H1 (cell line): ENCODE measurements at regions of chr2 and their contacts with region 1.

Region 1: DNA sequence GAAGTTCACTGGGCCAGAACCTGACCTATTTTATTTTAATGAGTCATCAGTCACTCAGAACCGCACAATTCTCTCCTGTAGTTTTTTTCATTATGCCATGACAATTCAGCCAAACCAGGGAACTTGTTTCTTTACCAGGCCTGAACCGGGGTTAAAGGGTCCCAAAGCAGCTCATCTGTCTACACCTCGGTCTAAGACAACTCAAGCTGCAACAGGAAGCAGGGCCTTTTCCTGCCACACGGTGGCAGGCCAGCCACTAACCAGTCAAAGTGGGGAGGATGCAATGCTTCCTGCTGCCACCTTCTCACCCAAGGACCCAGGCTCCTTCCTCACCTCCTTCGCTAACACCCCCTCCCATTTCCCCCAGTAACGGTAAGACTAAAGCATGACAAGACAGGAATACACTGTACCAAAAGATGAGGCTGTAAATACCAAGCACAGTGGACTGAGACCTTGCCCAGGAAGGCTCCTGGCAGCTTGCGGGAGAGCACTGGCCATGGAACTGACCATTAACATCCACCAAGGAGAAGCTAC is 56.7 kb upstream of the ACKR3 start:
- DNase-seq: peak; percentile 53 to 70
- H3K4me3 ChIP-seq: no peak overlapping the region
- H3K27ac ChIP-seq: no peak overlapping the region
- H3K4me1 ChIP-seq: no peaks in the 10 kb centered on the region
- H3K27me3 ChIP-seq: no peaks in the 10 kb centered on the region; a peak in 1 of 7 replicates
- CTCF ChIP-seq: peak; percentile 93 to 97 (median 93)
- EP300 ChIP-seq: no peak
- POLR2A ChIP-seq: no peak
- RAD21 ChIP-seq: peak; percentile 87 to 88

Region 2: GRCh38 chr2:236309669-236310029 is 203.3 kb before region 1 on chr2:
- CTCF ChIA-PET with region 1: interaction called, 17 read pairs
- POLR2A ChIA-PET with region 1: no interaction called
- DNase-seq: peak; percentile 13 to 77
- H3K4me3 ChIP-seq: no peak overlapping the region
- H3K27ac ChIP-seq: no peak overlapping the region
- H3K4me1 ChIP-seq: peaks cover 3 to 12% (median 9%) of the 10 kb centered on the region in 4 experiments; a peak in 5 of 7 replicates
- H3K27me3 ChIP-seq: no peaks in the 10 kb centered on the region
- CTCF ChIP-seq: peak; percentile 80 to 83 (median 82)
- EP300 ChIP-seq: no peak
- POLR2A ChIP-seq: no peak
- RAD21 ChIP-seq: peak; percentile 93 to 97

Region 3: GRCh38 chr2:236536727-236537398 is 23.9 kb after region 1 on chr2:
- CTCF ChIA-PET with region 1: interaction called, 22 read pairs
- POLR2A ChIA-PET with region 1: no interaction called
- DNase-seq: no peak
- H3K4me3 ChIP-seq: no peak overlapping the region
- H3K27ac ChIP-seq: no peak overlapping the region
- H3K4me1 ChIP-seq: no peaks in the 10 kb centered on the region; a peak in 1 of 7 replicates
- H3K27me3 ChIP-seq: no peaks in the 10 kb centered on the region
- CTCF ChIP-seq: no peak
- EP300 ChIP-seq: no peak
- POLR2A ChIP-seq: no peak
- RAD21 ChIP-seq: 0 out of 4 replicates have a peak, but pooled peaks of 1 of the 2 experiments have one; percentile 15

Region 4: GRCh38 chr2:236604575-236605344 is 91.8 kb after region 1 on chr2:
- CTCF ChIA-PET with region 1: interaction called, 13 read pairs
- POLR2A ChIA-PET with region 1: interaction called, 3 read pairs
- DNase-seq: no peak
- H3K4me3 ChIP-seq: no peak overlapping the region
- H3K27ac ChIP-seq: no peak overlapping the region
- H3K4me1 ChIP-seq: no peaks in the 10 kb centered on the region
- H3K27me3 ChIP-seq: no peaks in the 10 kb centered on the region
- CTCF ChIP-seq: no peak
- EP300 ChIP-seq: no peak
- POLR2A ChIP-seq: no peak
- RAD21 ChIP-seq: no peak

Region 5: DNA sequence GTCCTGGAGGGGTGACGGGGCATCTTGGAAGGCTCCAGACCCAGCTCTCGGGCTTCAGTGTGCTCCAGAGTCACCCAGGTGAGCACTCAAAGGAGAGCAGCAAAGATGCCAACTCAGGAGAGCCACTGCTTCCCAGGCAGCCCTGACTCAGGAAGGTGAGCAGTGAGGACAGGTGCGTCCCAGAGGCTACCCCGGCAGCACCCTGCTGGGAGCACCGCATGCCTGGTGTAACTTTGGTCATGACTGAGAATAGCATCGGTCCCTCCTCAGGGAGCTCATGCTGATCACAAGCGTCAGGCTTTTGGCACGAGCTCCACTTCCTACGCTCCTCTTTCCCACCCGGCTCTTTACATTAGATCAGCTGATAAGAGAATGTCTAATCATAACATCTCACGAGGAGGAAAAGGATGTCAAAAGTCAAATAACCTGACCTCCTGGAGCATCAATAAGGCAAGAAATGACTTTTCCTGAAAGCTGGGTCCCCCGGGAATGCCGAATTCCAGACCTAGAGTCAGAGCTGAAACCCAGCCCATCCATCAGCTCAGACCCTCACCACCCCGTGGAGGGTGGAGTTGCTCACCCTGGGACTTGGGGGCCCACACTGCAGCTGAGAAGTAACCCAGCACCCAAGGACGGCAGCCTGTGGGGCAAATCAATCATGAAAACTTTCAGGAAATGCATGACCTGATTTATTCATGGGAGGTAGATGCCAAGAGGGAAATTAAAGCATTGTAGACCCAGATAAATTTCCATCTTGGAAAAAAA is 305.5 kb after region 1 on chr2:
- CTCF ChIA-PET with region 1: no interaction called
- POLR2A ChIA-PET with region 1: no interaction called
- DNase-seq: no peak
- H3K4me3 ChIP-seq: no peak overlapping the region
- H3K27ac ChIP-seq: no peak overlapping the region
- H3K4me1 ChIP-seq: peaks cover 0 to 4% (median 2%) of the 10 kb centered on the region in 4 experiments; a peak in 5 of 7 replicates
- H3K27me3 ChIP-seq: no peaks in the 10 kb centered on the region; a peak in 1 of 7 replicates
- CTCF ChIP-seq: no peak
- EP300 ChIP-seq: no peak
- POLR2A ChIP-seq: no peak
- RAD21 ChIP-seq: no peak

Region 6: DNA sequence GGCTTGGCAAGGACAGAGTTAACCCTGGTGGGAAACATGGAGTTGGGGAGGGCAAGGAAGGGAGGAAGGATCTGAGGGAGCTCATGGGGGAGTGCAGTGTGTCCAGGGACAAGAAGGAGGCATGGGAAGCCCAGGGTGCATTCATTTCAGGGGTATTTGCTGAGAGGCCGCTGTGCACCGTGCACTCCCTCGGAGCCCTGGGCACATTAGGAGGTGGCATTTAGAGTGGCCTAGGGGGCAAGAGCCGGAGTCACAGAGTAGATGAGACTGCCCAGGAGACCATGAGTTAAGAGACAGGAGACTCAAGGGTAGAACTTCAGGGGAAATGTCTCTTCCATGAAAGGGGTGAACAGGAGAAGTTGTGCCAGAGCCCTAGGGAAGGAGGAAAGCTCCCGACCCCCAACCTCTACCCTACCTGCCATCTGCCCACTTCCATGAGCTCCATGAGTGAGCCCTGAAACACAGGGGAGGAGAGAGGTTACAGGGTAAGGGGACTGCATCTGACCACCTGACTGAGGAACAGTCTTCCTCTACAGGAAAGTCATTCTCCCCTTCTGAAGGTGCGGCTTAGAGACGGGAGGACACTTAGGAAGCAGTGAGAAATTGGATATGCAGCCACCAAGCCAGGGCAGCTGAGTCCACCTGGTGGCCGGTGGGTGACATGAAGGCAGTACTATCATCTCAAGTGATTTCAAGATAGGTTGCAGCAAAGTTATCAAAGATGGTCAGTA is 514.2 kb after region 1 on chr2:
- CTCF ChIA-PET with region 1: interaction called, 36 read pairs
- POLR2A ChIA-PET with region 1: no interaction called
- DNase-seq: peak; percentile 29 to 74
- H3K4me3 ChIP-seq: no peak overlapping the region
- H3K27ac ChIP-seq: no peak overlapping the region
- H3K4me1 ChIP-seq: no peaks in the 10 kb centered on the region
- H3K27me3 ChIP-seq: no peaks in the 10 kb centered on the region; a peak in 2 of 7 replicates
- CTCF ChIP-seq: peak; percentile 82 to 97 (median 82)
- EP300 ChIP-seq: no peak
- POLR2A ChIP-seq: no peak
- RAD21 ChIP-seq: peak; percentile 99 to 100